ENCODE measurements at regions of chr7 and their contacts with region 1.

Region 1: DNA sequence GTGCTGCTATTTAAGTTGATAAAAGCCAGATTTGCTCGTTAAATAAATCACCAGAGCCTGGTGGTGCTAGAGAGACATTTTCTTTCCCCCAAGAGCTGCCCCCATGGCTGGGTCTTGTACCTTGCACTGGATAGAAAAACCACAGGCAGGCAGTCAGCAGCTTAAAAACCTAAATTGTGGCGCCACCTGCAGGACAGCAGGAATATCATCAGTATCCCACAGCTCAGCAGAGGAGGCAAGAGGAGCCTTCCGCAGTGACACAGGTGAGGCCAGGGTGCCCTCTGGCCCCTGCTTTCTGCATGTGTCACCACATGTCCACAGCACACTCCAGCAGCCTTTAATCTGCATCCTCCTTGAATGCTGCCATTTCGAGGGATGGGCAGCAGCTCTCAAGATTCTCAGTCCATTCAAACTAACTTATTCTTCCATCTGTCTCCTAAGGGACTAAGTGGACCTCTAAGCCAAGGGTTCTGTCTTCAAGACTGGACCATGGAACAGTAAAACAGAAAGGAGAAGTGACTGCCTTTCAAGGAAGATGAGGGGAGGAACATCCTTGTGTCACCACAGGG is 4.5 kb upstream of the PLXNA4 start:
- DNase-seq: peak; percentile 77
- H3K4me3 ChIP-seq: no peak overlapping the region
- H3K27ac ChIP-seq: no peak overlapping the region
- H3K4me1 ChIP-seq: peaks cover 7 to 15% (median 10%) of the 10 kb centered on the region in 4 donors
- H3K27me3 ChIP-seq: peaks cover 31% of the 10 kb centered on the region
- CTCF ChIP-seq: peak; percentile 71 to 84 (median 78)
- EP300 ChIP-seq: no peak
- POLR2A ChIP-seq: no peak

Region 2: GRCh38 chr7:131688738-131689661 is 891.8 kb before region 1 on chr7:
- in situ Hi-C with region 1: loop called in 2 of 4 experiments (anchors 10 to 25 kb)
- intact Hi-C with region 1: loop called (anchors 5 kb)
- DNase-seq: peak; percentile 62
- H3K4me3 ChIP-seq: no peak overlapping the region
- H3K27ac ChIP-seq: no peak overlapping the region
- H3K4me1 ChIP-seq: peaks cover 0 to 7% (median 7%) of the 10 kb centered on the region in 4 donors
- H3K27me3 ChIP-seq: peaks cover 41% of the 10 kb centered on the region
- CTCF ChIP-seq: peak; percentile 88 to 94 (median 92)
- EP300 ChIP-seq: no peak
- POLR2A ChIP-seq: no peak

Region 3: GRCh38 chr7:131945313-131945911 is 635.4 kb before region 1 on chr7:
- in situ Hi-C with region 1: loop called in 2 of 4 experiments (anchors 10 to 25 kb)
- intact Hi-C with region 1: loop called (anchors 10 kb)
- DNase-seq: peak; percentile 42
- H3K4me3 ChIP-seq: peak overlapping the region in 2 of 4 donors; percentile 1 to 34
- H3K27ac ChIP-seq: no peak overlapping the region
- H3K4me1 ChIP-seq: peaks cover 9 to 22% (median 21%) of the 10 kb centered on the region in 4 donors
- H3K27me3 ChIP-seq: peaks cover 8% of the 10 kb centered on the region
- CTCF ChIP-seq: peak; percentile 80 to 87 (median 84)
- EP300 ChIP-seq: no peak
- POLR2A ChIP-seq: no peak

Region 4: DNA sequence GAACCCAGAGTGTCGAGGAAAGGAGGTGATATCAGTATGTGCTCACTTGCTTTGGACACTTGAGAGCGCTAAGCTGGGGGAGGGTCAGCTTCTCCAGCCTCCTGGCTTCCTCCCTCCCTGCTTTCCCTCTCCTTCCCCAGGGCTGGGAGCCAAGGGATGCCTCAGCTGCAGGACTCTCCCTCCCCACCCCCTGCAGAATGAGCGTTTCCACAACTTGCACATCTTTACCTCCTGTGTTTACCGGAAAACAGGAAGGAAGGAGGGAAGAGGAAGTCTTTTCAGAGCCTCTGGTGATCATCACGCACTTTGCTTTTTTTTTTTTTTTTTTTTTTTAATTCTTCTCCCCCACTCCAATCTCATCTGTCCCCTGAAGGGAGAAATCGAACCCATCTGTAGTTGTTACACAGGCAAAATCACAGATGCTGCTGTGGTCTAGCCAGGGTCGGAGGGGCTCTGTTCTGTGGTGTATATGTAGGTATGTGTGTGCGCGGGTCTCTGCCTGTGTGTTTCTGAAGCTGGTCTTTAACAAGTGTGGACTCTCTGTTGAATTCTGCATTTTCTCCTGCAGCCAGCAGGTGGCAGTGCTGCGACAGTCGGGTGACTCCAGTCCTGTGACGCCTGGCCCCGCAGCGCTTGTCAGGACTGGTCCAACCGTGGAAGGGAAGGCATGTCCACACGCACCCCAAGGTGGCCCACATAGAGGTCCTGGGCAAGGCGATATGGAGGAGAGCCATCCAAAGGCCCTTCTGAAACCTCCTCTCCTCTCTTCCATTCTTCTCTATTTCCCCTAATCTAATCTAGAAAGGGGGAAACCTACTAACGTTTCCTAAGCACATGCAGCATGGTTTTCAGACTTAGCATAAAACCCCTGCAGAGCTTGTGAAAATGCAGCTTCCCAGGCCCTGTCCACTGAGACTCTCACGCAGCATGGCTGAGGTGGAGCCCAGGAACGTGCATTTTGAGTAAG is 262.2 kb before region 1 on chr7:
- in situ Hi-C with region 1: loop called in 3 of 4 experiments (anchors 5 to 10 kb)
- intact Hi-C with region 1: loop called (anchors 2 kb)
- DNase-seq: peak; percentile 85
- H3K4me3 ChIP-seq: no peak overlapping the region
- H3K27ac ChIP-seq: no peak overlapping the region
- H3K4me1 ChIP-seq: peaks cover 0 to 10% (median 7%) of the 10 kb centered on the region in 4 donors
- H3K27me3 ChIP-seq: no peaks in the 10 kb centered on the region
- CTCF ChIP-seq: peak; percentile 87 to 94 (median 88)
- EP300 ChIP-seq: no peak
- POLR2A ChIP-seq: no peak

Region 5: DNA sequence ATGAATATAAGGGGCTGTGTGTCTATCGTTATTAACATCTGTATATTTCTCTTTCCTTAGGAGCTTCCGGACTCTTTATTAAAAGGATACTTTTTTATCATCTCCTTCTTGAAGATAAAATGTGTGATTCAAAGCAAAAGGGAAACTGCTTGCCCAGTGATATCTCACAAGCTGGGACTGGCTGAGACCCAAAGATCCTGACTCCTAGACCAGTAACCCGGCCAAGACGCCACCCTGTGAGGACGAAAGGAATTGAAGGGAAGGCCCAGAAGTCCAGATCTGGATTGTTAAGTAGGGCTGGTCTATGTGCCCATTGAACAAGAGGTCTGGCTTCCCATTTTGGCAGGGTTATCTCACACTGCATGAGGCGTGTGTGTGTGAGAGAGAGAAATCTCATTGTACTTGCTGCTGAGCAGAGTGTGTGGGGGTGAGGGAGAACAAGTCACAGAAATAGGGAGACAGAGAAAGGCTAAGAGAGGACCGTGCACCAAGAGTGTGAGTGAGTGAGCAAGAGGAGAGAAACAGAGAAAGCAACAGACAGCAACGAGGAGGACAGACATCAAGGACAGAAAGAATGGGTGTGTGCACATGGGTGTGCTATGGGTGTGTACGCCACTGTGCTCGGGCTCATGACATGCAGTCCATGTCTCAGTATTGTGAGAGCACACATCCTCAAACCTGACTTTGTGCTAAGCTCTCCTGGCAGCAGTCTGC is 79.9 kb before region 1 on chr7:
- in situ Hi-C with region 1: no loop called
- intact Hi-C with region 1: no loop called
- DNase-seq: peak; percentile 28
- H3K4me3 ChIP-seq: no peak overlapping the region
- H3K27ac ChIP-seq: no peak overlapping the region
- H3K4me1 ChIP-seq: no peaks in the 10 kb centered on the region
- H3K27me3 ChIP-seq: no peaks in the 10 kb centered on the region
- CTCF ChIP-seq: peak in 3 of 5 experiments; percentile 16 to 29 (median 22)
- EP300 ChIP-seq: no peak
- POLR2A ChIP-seq: no peak

Region 6: DNA sequence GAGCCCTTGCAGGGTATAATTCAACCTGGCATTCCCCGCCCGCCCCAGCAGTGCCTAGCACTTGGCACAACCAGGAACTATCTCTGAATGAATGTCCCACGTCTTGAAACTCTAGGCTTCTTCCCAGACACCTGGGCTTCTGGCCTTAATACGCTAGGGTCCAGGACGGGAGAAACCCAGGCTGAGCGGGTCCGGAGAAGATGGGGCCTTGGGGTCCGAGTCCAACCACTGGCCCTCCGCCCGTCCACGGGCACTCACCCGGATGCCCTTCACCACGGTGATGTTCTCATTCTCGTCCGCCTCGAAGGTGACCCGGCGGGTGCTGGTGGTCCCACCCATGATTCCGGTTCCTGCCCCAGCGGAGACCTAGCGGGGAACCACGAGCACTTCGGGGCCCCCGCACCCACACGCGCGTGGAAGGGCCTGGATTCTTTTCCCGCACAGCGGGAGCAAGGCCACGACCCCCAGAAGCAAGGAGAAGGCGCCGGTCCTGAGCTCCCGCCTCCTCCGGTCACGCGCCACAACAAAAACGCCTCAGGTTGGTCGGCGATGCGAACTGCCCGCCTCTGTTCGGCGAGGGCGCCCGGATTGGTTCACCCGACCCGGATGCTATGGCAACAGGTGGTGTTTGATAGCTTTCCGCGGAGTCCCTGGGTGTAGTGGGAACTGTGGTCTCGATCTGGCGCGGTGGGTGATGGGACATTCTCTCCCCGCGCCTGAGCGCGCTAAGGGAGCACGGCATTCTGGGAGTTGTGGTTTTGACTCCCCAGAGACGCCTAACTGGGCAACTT is 501.0 kb after region 1 on chr7 and contains the start of gene CHCHD3:
- in situ Hi-C with region 1: no loop called
- intact Hi-C with region 1: no loop called
- DNase-seq: peak; percentile 98
- H3K4me3 ChIP-seq: peak within 1 kb of the TSS; percentile 62 to 88 (median 74)
- H3K27ac ChIP-seq: peak within 1 kb of the TSS; percentile 80 to 89 (median 88)
- H3K4me1 ChIP-seq: peaks cover 0 to 28% (median 16%) of the 10 kb centered on the region in 4 donors
- H3K27me3 ChIP-seq: no peaks in the 10 kb centered on the region
- CTCF ChIP-seq: no peak
- EP300 ChIP-seq: no peak
- POLR2A ChIP-seq: peak; percentile 82
- total RNA-seq, gene CHCHD3: 49.4 to 78.1 (median 52.9) TPM